ENCODE measurements at regions of chr16 and their contacts with region 1.

Region 1: GRCh38 chr16:88442727-88443576 is 10.1 kb upstream of the ZFPM1 start:
- DNase-seq: peak; percentile 73
- H3K4me3 ChIP-seq: no peak overlapping the region
- H3K27ac ChIP-seq: no peak overlapping the region
- H3K4me1 ChIP-seq: peaks cover 3% of the 10 kb centered on the region
- H3K27me3 ChIP-seq: peaks cover 41% of the 10 kb centered on the region
- CTCF ChIP-seq: peak; percentile 99

Region 2: GRCh38 chr16:87778830-87779579 is 663.9 kb before region 1 on chr16:
- intact Hi-C with region 1: no loop called
- DNase-seq: peak; percentile 87
- H3K4me3 ChIP-seq: no peak overlapping the region
- H3K27ac ChIP-seq: no peak overlapping the region
- H3K4me1 ChIP-seq: peaks cover 14% of the 10 kb centered on the region
- H3K27me3 ChIP-seq: peaks cover 38% of the 10 kb centered on the region
- CTCF ChIP-seq: peak; percentile 97

Region 3: DNA sequence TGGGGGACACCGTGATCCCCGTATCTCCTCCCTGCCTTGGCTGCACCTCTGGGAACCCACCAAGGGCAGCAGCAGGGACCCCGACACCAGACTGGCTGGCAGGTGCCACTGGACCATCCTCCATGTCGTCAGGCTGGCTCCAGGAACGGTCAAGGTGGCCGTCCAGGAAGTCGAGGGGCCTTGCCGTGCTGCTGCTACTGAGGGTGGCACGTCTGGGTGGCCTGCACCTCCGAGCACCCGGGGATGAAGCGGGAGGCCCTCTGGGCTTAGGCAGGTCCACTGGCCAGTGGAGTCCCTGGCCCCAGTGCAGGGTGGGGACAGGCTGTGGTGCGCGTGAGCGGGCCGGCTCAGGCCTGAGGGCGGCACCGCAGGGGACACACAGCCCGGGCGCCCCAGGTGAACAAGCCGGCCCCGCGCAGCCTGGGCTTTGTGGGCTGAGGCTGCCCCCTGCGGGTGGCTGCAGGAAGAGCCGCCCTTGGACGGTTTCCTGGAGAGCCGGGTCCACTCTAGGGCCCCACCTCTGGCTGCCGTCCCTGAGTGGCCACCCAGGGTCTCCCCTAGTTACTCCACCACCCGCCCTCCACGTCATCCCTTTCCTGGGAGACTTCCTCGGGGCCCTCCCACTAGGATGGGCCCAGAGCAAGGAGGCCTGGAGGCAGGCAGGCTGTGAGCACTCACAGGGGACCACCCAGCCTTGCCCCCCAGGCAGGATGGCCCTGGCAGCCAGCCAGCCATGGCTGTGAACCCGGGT is 84.4 kb after region 1 on chr16:
- intact Hi-C with region 1: loop called (anchors 5 kb)
- DNase-seq: peak; percentile 68
- H3K4me3 ChIP-seq: no peak overlapping the region
- H3K27ac ChIP-seq: no peak overlapping the region
- H3K4me1 ChIP-seq: peaks cover 39% of the 10 kb centered on the region
- H3K27me3 ChIP-seq: no peaks in the 10 kb centered on the region
- CTCF ChIP-seq: peak; percentile 96

Region 4: DNA sequence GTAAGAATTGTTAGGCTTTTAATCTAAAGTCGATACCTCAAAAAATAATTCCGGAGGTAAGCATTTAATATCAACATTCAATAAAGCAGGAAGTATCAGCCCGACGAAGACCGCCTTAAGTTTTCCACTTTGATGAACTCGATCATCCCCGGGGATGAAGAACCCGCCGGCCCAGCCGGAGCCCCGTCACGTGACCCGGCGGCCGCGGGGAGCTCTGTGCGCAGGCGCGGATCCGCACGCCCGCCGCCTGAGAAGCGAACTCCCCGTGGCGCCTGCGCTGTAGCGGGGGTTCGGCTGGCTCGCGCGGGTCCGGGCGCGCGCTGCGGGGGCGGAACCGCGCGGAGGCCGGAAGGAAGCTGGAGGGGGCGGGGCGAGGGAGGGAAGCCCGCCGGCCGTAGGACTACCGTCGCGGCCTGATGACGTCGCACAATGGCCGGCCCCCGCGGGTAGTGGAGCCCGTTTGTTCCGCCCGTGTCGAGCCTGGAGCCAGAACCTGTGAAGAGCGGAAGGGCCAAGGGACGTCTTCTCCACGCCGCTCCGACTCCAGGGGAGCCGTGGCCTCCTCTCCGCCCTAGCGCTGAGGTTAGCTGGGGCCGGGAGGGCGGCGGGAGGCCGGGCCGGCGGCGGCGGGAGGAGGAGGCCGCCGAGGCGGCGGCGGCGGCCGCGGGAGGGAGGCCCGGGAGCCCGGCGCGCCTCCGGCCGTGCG is 127.2 kb after region 1 on chr16 and contains the start of gene ZC3H18:
- intact Hi-C with region 1: loop called (anchors 10 kb)
- DNase-seq: peak; percentile 98
- H3K4me3 ChIP-seq: peak within 1 kb of the TSS; percentile 99
- H3K27ac ChIP-seq: peak within 1 kb of the TSS; percentile 90
- H3K4me1 ChIP-seq: peaks cover 33% of the 10 kb centered on the region
- H3K27me3 ChIP-seq: no peaks in the 10 kb centered on the region
- CTCF ChIP-seq: no peak
- total RNA-seq, gene ZC3H18: 21.3 TPM

Region 5: GRCh38 chr16:88790312-88791211 is 347.6 kb after region 1 on chr16:
- intact Hi-C with region 1: no loop called
- DNase-seq: peak; percentile 52
- H3K4me3 ChIP-seq: no peak overlapping the region
- H3K27ac ChIP-seq: peak overlapping the region; percentile 9
- H3K4me1 ChIP-seq: peaks cover 6% of the 10 kb centered on the region
- H3K27me3 ChIP-seq: peaks cover 69% of the 10 kb centered on the region
- CTCF ChIP-seq: no peak